Left cardiac atrium (tissue), 4 donors: ENCODE measurements at regions of chr1 and their contacts with region 1.

Region 1: DNA sequence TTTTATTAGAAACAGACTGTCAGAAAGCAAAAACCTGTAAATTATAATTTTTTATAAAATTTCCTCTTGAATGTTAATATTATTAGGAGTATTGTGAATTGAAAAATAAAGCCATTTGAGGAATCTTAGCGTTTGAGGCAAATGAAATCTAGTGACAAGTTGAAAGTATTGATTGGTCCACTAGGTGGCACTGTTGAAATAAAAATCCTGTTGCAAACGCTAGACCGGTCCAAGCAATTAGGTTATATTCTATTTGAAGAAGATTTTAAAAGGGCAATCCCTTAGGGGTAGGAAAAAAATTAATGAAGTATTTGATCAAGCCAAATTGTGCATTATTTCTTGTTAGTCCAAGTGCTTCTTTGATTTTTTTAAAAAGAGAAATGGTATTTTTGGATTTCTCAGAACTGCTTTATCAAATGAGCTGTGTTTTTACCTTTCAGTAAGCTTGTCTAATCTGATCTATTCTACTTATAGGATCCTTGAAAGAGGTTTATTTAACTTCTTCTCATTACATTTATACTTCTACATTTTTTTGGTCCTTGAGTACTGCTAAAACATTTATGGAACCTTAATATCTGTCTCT is 57.7 kb downstream of the ATG4C start:
- DNase-seq: no peak
- ATAC-seq: peak; percentile 50 to 60

Region 2: GRCh38 chr1:63442141-63442475 is 600.4 kb after region 1 on chr1:
- intact Hi-C with region 1: loop called in 1 of 2 experiments (anchors 5 kb)
- DNase-seq: no peak
- ATAC-seq: no peak

Region 3: DNA sequence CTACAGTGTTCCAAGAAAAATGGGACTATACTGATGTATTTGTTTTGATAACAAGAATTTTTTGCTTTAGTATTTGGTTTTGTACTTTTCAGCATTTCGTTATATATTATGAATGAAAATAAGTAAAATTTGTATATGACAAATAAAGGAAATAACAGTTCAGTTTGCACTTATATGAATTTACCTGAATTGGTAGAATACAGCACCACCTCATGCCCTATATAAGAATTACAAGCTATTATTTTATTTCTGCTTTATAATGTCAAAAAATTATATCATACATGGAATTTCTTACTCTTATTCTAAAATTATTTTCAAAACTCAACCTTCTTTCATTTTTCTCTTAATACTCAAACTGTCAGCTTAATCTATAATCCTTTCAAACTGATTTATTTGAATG is 696.3 kb after region 1 on chr1:
- intact Hi-C with region 1: loop called in 1 of 2 experiments (anchors 5 kb)
- DNase-seq: no peak
- ATAC-seq: no peak